Endothelial cell of umbilical vein (primary cell): ENCODE measurements at regions of chr11 and their contacts with region 1.

Region 1: GRCh38 chr11:130002846-130003716 is 446 bp upstream of the PRDM10 start:
- DNase-seq: peak; percentile 98
- H3K4me3 ChIP-seq: peak overlapping the region; percentile 1 to 94 (median 53)
- H3K27ac ChIP-seq: peak overlapping the region; percentile 92
- H3K4me1 ChIP-seq: peaks cover 9% of the 10 kb centered on the region
- H3K27me3 ChIP-seq: no peaks in the 10 kb centered on the region
- CTCF ChIP-seq: no peak
- POLR2A ChIP-seq: peak; percentile 70

Region 2: DNA sequence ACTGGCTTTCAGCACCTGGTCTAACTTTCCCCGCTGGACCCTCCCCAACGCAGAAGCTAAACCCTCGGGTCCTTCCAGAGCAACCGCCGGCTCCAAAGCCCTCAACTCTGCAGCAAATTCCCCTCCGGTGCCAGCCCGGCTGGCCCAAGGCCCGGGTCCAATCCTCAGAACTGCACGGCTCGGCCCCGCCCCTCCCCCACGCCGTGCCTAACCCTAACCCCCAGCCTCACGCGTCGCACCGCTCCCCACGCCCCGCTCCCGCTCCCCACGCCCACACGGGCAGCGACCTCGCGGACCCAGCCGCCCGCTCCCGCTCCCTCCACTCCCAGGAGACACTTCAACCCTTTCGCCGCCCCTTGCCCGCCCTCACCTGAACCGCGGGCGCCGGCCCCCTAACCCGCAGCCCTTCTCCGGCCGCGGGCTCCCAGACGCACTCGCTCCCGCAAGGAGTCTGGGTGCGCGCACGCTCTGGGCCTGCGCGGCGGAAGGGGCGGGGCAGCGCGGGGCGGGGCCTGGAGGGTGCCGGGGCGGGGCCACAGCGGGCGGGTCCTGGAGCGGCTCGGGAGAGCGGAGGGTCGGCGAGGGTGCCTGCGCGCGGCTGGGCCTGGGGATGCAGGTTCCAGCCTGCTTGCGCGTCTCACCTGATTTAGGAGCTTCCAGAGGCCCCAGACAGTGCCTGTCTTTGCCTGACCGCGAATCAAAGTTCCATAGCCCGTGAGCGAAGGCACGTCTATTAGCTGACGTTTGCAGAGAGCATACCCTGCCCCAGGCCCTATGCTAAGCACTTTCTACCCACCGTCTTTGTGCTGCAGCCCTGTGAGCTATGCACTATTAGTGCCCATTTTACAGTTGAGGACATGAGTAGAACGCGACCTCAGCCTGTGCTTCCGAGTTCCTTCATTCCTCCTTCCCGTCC is 107.7 kb before region 1 on chr11 and contains the start of gene NFRKB:
- CTCF ChIA-PET with region 1: no interaction called
- POLR2A ChIA-PET with region 1: no interaction called
- dilution Hi-C with region 1: no loop called
- intact Hi-C with region 1: loop called (anchors 1 kb)
- DNase-seq: peak; percentile 84
- H3K4me3 ChIP-seq: peak within 1 kb of the TSS; percentile 72 to 95 (median 93)
- H3K27ac ChIP-seq: no peak within 1 kb of the TSS
- H3K4me1 ChIP-seq: peaks cover 9% of the 10 kb centered on the region
- H3K27me3 ChIP-seq: no peaks in the 10 kb centered on the region
- CTCF ChIP-seq: no peak
- POLR2A ChIP-seq: peak; percentile 83
- total RNA-seq, gene NFRKB: 30.1 and 30.6 TPM in 2 replicates

Region 3: GRCh38 chr11:129950101-129951091 is 52.7 kb before region 1 on chr11:
- CTCF ChIA-PET with region 1: interaction called, 13 read pairs
- POLR2A ChIA-PET with region 1: no interaction called
- dilution Hi-C with region 1: no loop called
- intact Hi-C with region 1: loop called (anchors 2 kb)
- DNase-seq: peak; percentile 77
- H3K4me3 ChIP-seq: peak overlapping the region in 1 of 3 experiments; percentile 25
- H3K27ac ChIP-seq: peak overlapping the region; percentile 54
- H3K4me1 ChIP-seq: peaks cover 19% of the 10 kb centered on the region
- H3K27me3 ChIP-seq: no peaks in the 10 kb centered on the region
- CTCF ChIP-seq: no peak
- POLR2A ChIP-seq: no peak

Region 4: DNA sequence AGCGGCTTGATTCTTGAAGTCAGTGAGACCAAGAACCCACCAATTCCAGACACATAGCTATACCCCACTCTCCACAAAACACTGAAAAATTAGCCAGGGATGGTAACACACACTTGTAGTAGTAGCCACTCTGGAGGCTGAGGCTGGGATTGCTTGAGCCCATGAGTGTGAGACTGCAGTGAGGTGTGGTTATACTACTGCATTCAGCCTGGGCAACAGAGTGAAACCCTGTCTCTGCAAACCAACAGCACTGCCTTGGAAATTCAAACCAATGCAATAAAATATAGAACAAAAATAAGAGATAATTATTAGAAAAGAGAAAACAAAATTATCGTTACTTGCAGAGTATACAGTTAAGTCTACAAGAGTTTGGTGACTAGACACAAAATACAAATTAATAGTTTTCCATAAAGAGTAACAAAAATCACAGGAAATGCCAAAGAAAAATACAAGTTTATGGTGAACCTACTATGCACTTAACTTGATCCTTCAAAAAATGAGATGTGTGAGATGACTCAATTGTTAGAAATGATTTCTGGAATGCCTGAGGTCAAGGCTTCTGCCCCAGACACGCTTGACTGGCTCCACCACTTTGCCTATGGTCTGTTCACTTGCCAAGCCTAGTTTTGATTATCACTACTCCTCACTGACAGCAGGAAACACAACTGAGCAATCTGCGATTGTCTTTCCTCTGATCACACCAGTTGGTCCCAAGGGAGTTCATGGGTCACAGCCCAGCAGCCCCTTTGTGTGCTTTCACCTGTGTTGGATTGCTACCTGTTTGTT is 19.9 kb after region 1 on chr11:
- CTCF ChIA-PET with region 1: interaction called, 3 read pairs
- POLR2A ChIA-PET with region 1: no interaction called
- dilution Hi-C with region 1: no loop called
- intact Hi-C with region 1: loop called (anchors 1 kb)
- DNase-seq: peak; percentile 56
- H3K4me3 ChIP-seq: no peak overlapping the region
- H3K27ac ChIP-seq: peak overlapping the region; percentile 87
- H3K4me1 ChIP-seq: peaks cover 18% of the 10 kb centered on the region
- H3K27me3 ChIP-seq: no peaks in the 10 kb centered on the region
- CTCF ChIP-seq: no peak
- POLR2A ChIP-seq: no peak

Region 5: GRCh38 chr11:130042093-130042591 is 39.1 kb after region 1 on chr11:
- CTCF ChIA-PET with region 1: no interaction called
- POLR2A ChIA-PET with region 1: interaction called, 3 read pairs
- dilution Hi-C with region 1: no loop called
- intact Hi-C with region 1: loop called (anchors 1 kb)
- DNase-seq: peak; percentile 95
- H3K4me3 ChIP-seq: no peak overlapping the region
- H3K27ac ChIP-seq: peak overlapping the region; percentile 88
- H3K4me1 ChIP-seq: peaks cover 17% of the 10 kb centered on the region
- H3K27me3 ChIP-seq: no peaks in the 10 kb centered on the region
- CTCF ChIP-seq: no peak
- POLR2A ChIP-seq: no peak

Region 6: DNA sequence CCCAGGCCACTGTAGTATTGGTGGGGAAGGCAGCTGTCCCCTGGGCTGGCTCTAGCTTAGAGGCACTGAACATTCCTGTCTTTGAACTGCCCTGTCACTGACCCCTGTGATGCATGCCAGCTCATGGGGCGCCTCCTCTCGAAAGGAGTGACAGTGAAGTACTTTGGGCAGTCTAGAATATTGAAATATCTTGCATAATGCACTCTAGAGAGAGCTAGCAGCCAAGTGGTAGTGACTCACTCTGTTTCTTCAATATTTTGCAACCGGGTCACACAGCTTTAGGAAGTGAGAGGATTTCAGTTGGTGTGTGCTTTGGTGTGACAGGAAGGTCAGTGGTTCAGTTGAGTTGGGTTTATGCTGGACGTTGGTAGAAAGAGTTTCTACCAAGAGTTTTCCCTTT is 121.0 kb after region 1 on chr11:
- CTCF ChIA-PET with region 1: interaction called, 3 read pairs
- POLR2A ChIA-PET with region 1: interaction called, 11 read pairs
- dilution Hi-C with region 1: no loop called
- intact Hi-C with region 1: loop called (anchors 1 kb)
- DNase-seq: peak; percentile 72
- H3K4me3 ChIP-seq: no peak overlapping the region
- H3K27ac ChIP-seq: peak overlapping the region; percentile 60
- H3K4me1 ChIP-seq: peaks cover 54% of the 10 kb centered on the region
- H3K27me3 ChIP-seq: no peaks in the 10 kb centered on the region
- CTCF ChIP-seq: no peak
- POLR2A ChIP-seq: no peak